Aorta (tissue), 5 donors: ENCODE measurements at regions of chr7 and their contacts with region 1.

Region 1: DNA sequence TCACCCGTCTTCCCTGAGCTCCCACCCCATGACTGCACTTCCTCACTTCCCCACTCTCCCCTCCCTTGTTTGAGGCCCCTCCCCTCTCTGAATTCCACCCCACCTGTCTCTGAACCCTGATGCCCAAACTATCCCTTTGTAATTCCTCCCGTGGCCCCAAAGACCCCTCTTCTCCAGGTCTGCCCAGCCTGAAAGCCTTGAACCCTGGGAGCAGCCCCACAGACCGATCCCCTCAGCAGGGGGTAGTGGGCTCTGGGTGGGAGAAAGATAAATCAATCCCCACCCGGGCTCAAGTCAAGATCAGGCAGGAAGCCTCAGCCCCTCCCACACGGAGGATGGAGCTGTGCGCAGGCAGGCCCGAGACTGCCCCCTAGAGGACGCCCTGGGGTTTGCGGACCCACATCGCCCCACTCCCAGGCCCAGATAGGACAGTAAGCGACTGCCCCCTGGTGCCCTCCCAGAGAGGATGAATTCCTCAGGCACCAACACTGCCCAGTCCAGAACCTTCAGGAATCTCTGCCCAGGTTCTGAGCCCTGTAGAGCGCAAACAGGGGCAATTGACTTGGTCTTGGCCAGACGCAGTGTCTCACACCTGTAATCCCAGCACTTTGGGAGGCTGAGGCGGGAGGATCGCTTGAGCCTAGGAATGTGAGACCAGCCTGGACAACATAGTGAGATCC is 11.7 kb downstream of the HSPB1 start:
- DNase-seq: peak; percentile 97 to 99
- ATAC-seq: peak; percentile 93
- H3K4me3 ChIP-seq: no peak overlapping the region
- H3K27ac ChIP-seq: no peak overlapping the region
- H3K4me1 ChIP-seq: peaks cover 0 to 1% of the 10 kb centered on the region in 2 donors
- H3K27me3 ChIP-seq: no peaks in the 10 kb centered on the region

Region 2: GRCh38 chr7:76179686-76180085 is 134.5 kb before region 1 on chr7:
- intact Hi-C with region 1: loop called (anchors 1 to 2 kb)
- DNase-seq: no peak
- ATAC-seq: no peak
- H3K4me3 ChIP-seq: no peak overlapping the region
- H3K27ac ChIP-seq: no peak overlapping the region
- H3K4me1 ChIP-seq: no peaks in the 10 kb centered on the region
- H3K27me3 ChIP-seq: no peaks in the 10 kb centered on the region

Region 3: GRCh38 chr7:76282344-76283253 is 31.6 kb before region 1 on chr7:
- intact Hi-C with region 1: loop called in 1 of 2 experiments (anchors 5 kb)
- DNase-seq: peak in 1 of 2 donors; percentile 84
- ATAC-seq: peak; percentile 61
- H3K4me3 ChIP-seq: peak overlapping the region; percentile 33 to 40
- H3K27ac ChIP-seq: no peak overlapping the region
- H3K4me1 ChIP-seq: no peaks in the 10 kb centered on the region
- H3K27me3 ChIP-seq: no peaks in the 10 kb centered on the region

Region 4: DNA sequence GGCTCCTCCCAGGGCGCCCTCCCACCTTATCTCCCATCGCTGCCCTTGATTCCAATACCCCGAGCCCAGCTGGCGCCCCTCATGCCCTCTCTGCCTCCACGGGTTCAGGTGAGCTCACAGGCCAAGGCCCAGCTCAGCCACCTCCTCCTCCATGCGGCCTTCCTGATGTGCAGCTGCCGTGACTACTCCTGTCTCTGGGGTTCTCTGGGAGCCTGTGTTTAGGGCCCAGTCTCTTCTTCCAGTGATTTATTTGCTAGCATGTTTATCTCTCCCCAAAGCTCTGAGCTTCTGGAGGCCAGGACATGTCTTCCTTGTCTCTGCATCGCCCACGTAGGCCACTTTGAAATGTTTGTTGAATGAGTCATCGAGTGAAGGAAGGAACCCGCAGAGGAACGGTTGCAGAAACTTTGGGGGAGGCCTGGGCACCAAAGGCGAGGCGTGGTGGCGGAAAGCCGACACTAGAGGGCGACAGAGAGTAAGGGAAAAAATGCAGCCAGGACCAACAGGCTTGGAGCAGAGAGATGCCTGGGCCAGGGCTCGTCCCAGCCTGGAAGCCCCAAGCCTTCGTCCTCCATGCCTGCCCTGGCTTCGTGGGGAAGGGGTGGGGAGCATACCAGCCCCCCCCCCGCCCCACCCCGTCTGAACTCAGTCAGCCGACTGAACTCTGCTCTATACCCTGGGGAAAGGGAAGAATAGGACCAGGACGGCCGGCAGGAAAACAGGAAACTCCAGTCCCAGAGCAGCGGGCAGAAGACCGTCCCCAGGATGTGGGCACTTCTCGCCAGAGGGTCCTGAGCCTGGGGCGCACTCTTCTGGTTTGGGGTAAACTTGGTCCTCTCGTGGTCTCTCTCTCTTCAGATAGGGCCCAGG is 22.6 kb before region 1 on chr7:
- intact Hi-C with region 1: loop called (anchors 1 kb)
- DNase-seq: peak; percentile 93 to 97
- ATAC-seq: peak; percentile 88
- H3K4me3 ChIP-seq: peak overlapping the region in 1 of 2 donors; percentile 37
- H3K27ac ChIP-seq: peak overlapping the region; percentile 89 to 93
- H3K4me1 ChIP-seq: peaks cover 0 to 3% of the 10 kb centered on the region in 2 donors
- H3K27me3 ChIP-seq: no peaks in the 10 kb centered on the region

Region 5: GRCh38 chr7:76359111-76359978 is 45.2 kb after region 1 on chr7:
- intact Hi-C with region 1: loop called in 1 of 2 experiments (anchors 2 kb)
- DNase-seq: peak; percentile 98 to 99
- ATAC-seq: peak; percentile 98
- H3K4me3 ChIP-seq: peak overlapping the region; percentile 48 to 60
- H3K27ac ChIP-seq: peak overlapping the region in 1 of 2 donors; percentile 81
- H3K4me1 ChIP-seq: peaks cover 0 to 2% of the 10 kb centered on the region in 2 donors
- H3K27me3 ChIP-seq: no peaks in the 10 kb centered on the region

Region 6: GRCh38 chr7:76393116-76394031 is 79.2 kb after region 1 on chr7:
- intact Hi-C with region 1: loop called in 1 of 2 experiments (anchors 5 kb)
- DNase-seq: peak; percentile 97 to 98
- ATAC-seq: peak; percentile 94
- H3K4me3 ChIP-seq: peak overlapping the region in 1 of 2 donors; percentile 43
- H3K27ac ChIP-seq: peak overlapping the region in 1 of 2 donors; percentile 68
- H3K4me1 ChIP-seq: no peaks in the 10 kb centered on the region
- H3K27me3 ChIP-seq: no peaks in the 10 kb centered on the region